AG04449 (cell line): ENCODE measurements at regions of chr3 and their contacts with region 1.

Region 1: GRCh38 chr3:115783938-115784738 is 160.8 kb downstream of the GAP43 start:
- DNase-seq: no peak
- H3K4me3 ChIP-seq: peak overlapping the region; percentile 67
- CTCF ChIP-seq: peak; percentile 96

Region 2: GRCh38 chr3:114383875-114384557 is 1400.1 kb before region 1 on chr3:
- CTCF ChIA-PET with region 1: interaction called, 10 read pairs
- POLR2A ChIA-PET with region 1: no interaction called
- DNase-seq: peak; percentile 38
- H3K4me3 ChIP-seq: peak overlapping the region; percentile 48
- CTCF ChIP-seq: peak; percentile 90

Region 3: GRCh38 chr3:115692887-115693524 is 91.1 kb before region 1 on chr3:
- CTCF ChIA-PET with region 1: interaction called, 11 read pairs
- POLR2A ChIA-PET with region 1: no interaction called
- DNase-seq: no peak
- H3K4me3 ChIP-seq: no peak overlapping the region
- CTCF ChIP-seq: peak; percentile 80

Region 4: GRCh38 chr3:115758076-115758763 is 25.9 kb before region 1 on chr3:
- CTCF ChIA-PET with region 1: interaction called, 23 read pairs
- POLR2A ChIA-PET with region 1: no interaction called
- DNase-seq: no peak
- H3K4me3 ChIP-seq: no peak overlapping the region
- CTCF ChIP-seq: no peak

Region 5: GRCh38 chr3:115804722-115805121 is 20.6 kb after region 1 on chr3:
- CTCF ChIA-PET with region 1: interaction called, 49 read pairs
- POLR2A ChIA-PET with region 1: interaction called, 5 read pairs
- DNase-seq: peak; percentile 73
- H3K4me3 ChIP-seq: no peak overlapping the region
- CTCF ChIP-seq: no peak

Region 6: DNA sequence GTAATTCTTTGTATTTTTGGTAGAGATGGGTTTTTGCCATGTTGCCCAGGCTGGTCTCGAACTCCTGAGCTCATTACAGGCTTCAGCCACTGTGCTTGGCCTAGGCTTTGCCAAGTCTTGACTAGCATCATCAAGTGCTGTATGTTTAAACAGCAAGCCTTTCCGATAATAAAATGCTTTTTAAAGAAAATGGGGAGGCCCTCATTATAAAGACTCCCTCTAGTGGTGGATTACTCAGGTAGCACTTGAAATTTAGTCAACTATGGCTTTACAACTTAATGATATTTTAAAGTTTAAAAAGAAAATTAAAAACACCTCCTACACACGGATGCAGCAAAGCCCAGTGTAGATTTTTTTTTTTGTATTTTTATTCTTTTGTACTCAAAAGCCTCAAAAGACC is 52.8 kb after region 1 on chr3:
- CTCF ChIA-PET with region 1: interaction called, 14 read pairs
- POLR2A ChIA-PET with region 1: no interaction called
- DNase-seq: no peak
- H3K4me3 ChIP-seq: no peak overlapping the region
- CTCF ChIP-seq: peak; percentile 22